ENCODE measurements at regions of chr5 and their contacts with region 1.

Region 1: DNA sequence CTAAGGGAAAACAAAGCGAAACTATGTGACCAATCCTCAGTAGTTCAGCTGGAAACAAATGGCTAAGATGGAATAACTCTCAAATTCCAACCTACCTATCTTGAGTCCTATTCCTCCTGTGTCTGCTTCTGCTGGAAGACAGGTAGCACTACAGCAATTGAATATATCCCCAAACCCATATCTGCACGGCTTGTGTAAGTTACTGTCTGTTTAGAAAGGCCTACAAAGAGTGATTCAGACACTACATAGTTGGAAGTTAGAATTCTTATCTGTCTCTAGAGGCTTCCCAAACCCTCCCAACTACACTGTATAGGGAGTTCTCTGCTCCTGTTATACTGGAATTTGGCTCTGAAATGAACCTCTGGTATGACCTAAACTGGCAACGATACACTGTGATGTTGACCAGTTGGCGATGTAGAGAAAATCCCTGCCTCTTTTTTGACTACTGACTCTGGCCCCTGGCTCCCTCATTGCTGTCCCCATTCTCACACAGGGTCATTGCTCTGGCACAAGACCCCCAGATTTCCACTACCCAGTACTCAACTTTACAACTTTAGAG is 22.6 kb upstream of the NADK2 start:
- DNase-seq: no peak
- ATAC-seq: no peak
- H3K4me3 ChIP-seq: no peak overlapping the region
- H3K4me3 Mint-ChIP-seq: no peak overlapping the region
- H3K27ac ChIP-seq: no peak overlapping the region
- H3K27ac Mint-ChIP-seq: no peak overlapping the region
- H3K4me1 ChIP-seq: no peaks in the 10 kb centered on the region
- H3K4me1 Mint-ChIP-seq: no peaks in the 10 kb centered on the region
- H3K27me3 ChIP-seq: peaks cover 0 to 10% of the 10 kb centered on the region in 2 experiments
- H3K27me3 Mint-ChIP-seq: peaks cover 18% of the 10 kb centered on the region in 2 donors

Region 2: DNA sequence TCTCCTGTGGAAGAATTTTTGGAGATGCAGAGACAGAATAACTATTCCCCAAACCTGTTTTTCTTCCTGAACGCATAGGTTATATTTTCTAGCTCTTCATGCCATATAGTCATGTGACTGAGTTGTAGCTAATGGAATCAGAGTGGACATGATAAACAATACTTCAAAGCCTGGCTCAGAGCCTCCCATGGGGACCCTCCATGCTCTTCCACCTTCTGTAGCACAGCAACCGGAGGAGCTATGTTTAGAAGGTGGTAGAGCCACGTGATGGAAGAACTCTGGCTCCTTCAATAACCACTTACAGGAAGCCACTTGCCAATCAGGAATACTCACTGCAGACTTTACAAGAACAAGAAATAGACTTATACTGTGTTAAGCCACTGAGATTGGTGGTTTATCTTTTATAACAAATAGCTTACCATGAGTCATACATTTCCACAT is 61.7 kb before region 1 on chr5:
- CTCF ChIA-PET with region 1: no interaction called
- POLR2A ChIA-PET with region 1: interaction called in 1 of 2 experiments, 13 read pairs
- DNase-seq: no peak
- ATAC-seq: no peak
- H3K4me3 ChIP-seq: no peak overlapping the region
- H3K4me3 Mint-ChIP-seq: no peak overlapping the region
- H3K27ac ChIP-seq: no peak overlapping the region
- H3K27ac Mint-ChIP-seq: no peak overlapping the region
- H3K4me1 ChIP-seq: no peaks in the 10 kb centered on the region
- H3K4me1 Mint-ChIP-seq: no peaks in the 10 kb centered on the region
- H3K27me3 ChIP-seq: no peaks in the 10 kb centered on the region
- H3K27me3 Mint-ChIP-seq: no peaks in the 10 kb centered on the region

Region 3: DNA sequence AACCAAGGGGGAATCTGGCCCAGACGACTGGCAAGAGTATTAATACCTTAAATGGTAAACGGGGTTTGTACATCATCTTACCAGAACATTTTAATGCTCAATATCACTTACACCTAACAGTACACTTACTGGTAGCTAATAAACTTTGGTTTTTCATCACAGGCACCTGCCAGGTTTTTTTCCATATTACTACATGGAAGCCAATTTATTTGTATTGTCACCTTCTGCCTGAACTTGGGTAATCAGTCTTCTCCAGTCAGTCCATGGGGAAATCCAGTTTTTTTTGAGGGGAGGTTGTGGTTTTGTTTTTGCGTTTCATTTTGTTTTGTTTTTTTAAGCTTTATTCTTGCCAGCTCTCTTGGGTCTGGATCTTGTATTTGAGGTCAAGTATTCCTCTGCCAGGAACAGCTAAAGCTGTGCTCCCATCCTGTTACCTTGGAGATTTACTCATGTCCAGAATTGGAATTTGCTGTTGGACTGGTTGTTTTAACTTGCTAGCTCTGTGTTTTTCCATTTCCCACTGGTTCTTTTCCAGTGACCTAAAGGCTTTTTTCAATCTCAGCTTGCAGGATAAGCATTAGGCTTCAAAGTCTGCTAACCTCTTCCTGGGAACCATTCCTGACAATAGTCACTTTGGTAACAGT is 11.4 kb before region 1 on chr5:
- CTCF ChIA-PET with region 1: interaction called, 5 to 10 read pairs
- POLR2A ChIA-PET with region 1: no interaction called
- DNase-seq: no peak
- ATAC-seq: no peak
- H3K4me3 ChIP-seq: no peak overlapping the region
- H3K4me3 Mint-ChIP-seq: no peak overlapping the region
- H3K27ac ChIP-seq: no peak overlapping the region
- H3K27ac Mint-ChIP-seq: no peak overlapping the region
- H3K4me1 ChIP-seq: no peaks in the 10 kb centered on the region
- H3K4me1 Mint-ChIP-seq: no peaks in the 10 kb centered on the region
- H3K27me3 ChIP-seq: no peaks in the 10 kb centered on the region
- H3K27me3 Mint-ChIP-seq: peaks cover 11 to 19% of the 10 kb centered on the region in 2 donors